Activated CD4-positive, alpha-beta T cell treated with anti-CD3 and anti-CD28 coated beads for 36 hours (primary cell): ENCODE measurements at regions of chr2 and their contacts with region 1.

Region 1: GRCh38 chr2:157327621-157328500 is 2.2 kb upstream of the ERMN start:
- DNase-seq: peak; percentile 95
- ATAC-seq: peak; percentile 91
- H3K4me3 Mint-ChIP-seq: peak overlapping the region; percentile 29
- H3K27ac Mint-ChIP-seq: peak overlapping the region; percentile 72
- H3K4me1 Mint-ChIP-seq: peaks cover 61% of the 10 kb centered on the region
- H3K27me3 Mint-ChIP-seq: no peaks in the 10 kb centered on the region

Region 2: GRCh38 chr2:157349949-157350515 is 22.2 kb after region 1 on chr2:
- CTCF ChIA-PET with region 1: interaction called, 18 read pairs
- POLR2A ChIA-PET with region 1: no interaction called
- intact Hi-C with region 1: no loop called
- DNase-seq: no peak
- ATAC-seq: peak; percentile 23
- H3K4me3 Mint-ChIP-seq: no peak overlapping the region
- H3K27ac Mint-ChIP-seq: no peak overlapping the region
- H3K4me1 Mint-ChIP-seq: peaks cover 47% of the 10 kb centered on the region
- H3K27me3 Mint-ChIP-seq: no peaks in the 10 kb centered on the region

Region 3: GRCh38 chr2:157413326-157414035 is 85.6 kb after region 1 on chr2:
- CTCF ChIA-PET with region 1: interaction called, 42 read pairs
- POLR2A ChIA-PET with region 1: interaction called, 16 read pairs
- intact Hi-C with region 1: loop called (anchors 1 to 2 kb)
- DNase-seq: peak; percentile 64
- ATAC-seq: peak; percentile 67
- H3K4me3 Mint-ChIP-seq: peak overlapping the region; percentile 63
- H3K27ac Mint-ChIP-seq: peak overlapping the region; percentile 100
- H3K4me1 Mint-ChIP-seq: peaks cover 89% of the 10 kb centered on the region
- H3K27me3 Mint-ChIP-seq: no peaks in the 10 kb centered on the region

Region 4: GRCh38 chr2:157427003-157427921 is 99.4 kb after region 1 on chr2:
- CTCF ChIA-PET with region 1: interaction called, 42 read pairs
- POLR2A ChIA-PET with region 1: interaction called, 3 read pairs
- intact Hi-C with region 1: no loop called
- DNase-seq: no peak
- ATAC-seq: peak; percentile 23
- H3K4me3 Mint-ChIP-seq: peak overlapping the region; percentile 93
- H3K27ac Mint-ChIP-seq: peak overlapping the region; percentile 95
- H3K4me1 Mint-ChIP-seq: peaks cover 81% of the 10 kb centered on the region
- H3K27me3 Mint-ChIP-seq: no peaks in the 10 kb centered on the region

Region 5: DNA sequence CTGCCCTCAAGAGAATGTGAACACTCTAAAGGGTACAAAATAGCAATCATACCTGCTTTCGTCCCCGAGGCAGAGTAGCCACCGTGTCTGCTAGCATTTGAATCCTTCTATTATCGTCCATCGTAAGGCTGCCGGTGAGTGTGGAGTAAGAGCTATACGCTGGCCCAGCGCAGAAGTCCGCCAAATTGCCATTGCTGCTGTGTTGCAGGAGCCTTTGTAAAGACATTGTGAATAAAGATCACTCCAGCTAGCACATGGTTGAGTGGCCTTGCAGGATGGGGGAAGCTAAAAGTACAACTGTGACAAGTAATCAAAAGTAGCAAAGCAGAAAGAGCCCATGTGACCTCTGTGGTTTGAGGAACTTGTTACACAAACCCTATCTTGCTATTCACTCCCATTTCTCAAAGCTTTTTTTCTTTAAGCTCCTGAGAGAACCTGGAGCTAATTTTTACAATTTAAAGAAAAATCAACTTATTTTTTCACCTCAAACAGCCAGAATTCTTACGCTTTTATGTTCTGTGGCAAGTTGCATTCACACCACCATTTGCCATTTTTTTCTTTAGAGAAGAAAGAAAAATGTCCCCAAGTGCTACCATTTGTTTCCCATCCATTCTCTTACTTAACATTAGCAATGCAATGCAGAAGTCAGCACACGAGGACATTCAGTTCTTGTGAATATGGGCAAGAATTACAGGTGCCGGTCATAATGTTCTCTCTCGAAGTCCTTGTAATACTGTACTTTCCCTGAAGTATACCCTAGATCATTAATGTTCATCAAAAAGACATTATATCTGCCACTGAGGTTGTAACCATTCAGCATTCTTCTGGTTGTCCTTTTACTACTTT is 116.2 kb after region 1 on chr2 and contains the start of gene CYTIP:
- CTCF ChIA-PET with region 1: interaction called, 55 read pairs
- POLR2A ChIA-PET with region 1: interaction called, 18 read pairs
- intact Hi-C with region 1: loop called in 1 of 2 experiments (anchors 2 kb)
- DNase-seq: peak; percentile 82
- ATAC-seq: peak; percentile 44
- H3K4me3 Mint-ChIP-seq: peak within 1 kb of the TSS; percentile 93
- H3K27ac Mint-ChIP-seq: peak within 1 kb of the TSS; percentile 95
- H3K4me1 Mint-ChIP-seq: peaks cover 40% of the 10 kb centered on the region
- H3K27me3 Mint-ChIP-seq: no peaks in the 10 kb centered on the region
- total RNA-seq, gene CYTIP: 470 to 536 TPM

Region 6: GRCh38 chr2:157492189-157492773 is 164.4 kb after region 1 on chr2:
- CTCF ChIA-PET with region 1: interaction called, 43 read pairs
- POLR2A ChIA-PET with region 1: no interaction called
- intact Hi-C with region 1: loop called (anchors 2 to 5 kb)
- DNase-seq: peak; percentile 84
- ATAC-seq: peak; percentile 90
- H3K4me3 Mint-ChIP-seq: no peak overlapping the region
- H3K27ac Mint-ChIP-seq: no peak overlapping the region
- H3K4me1 Mint-ChIP-seq: peaks cover 68% of the 10 kb centered on the region
- H3K27me3 Mint-ChIP-seq: no peaks in the 10 kb centered on the region